RWPE1 (cell line): ENCODE measurements at regions of chr9 and their contacts with region 1.

Region 1: DNA sequence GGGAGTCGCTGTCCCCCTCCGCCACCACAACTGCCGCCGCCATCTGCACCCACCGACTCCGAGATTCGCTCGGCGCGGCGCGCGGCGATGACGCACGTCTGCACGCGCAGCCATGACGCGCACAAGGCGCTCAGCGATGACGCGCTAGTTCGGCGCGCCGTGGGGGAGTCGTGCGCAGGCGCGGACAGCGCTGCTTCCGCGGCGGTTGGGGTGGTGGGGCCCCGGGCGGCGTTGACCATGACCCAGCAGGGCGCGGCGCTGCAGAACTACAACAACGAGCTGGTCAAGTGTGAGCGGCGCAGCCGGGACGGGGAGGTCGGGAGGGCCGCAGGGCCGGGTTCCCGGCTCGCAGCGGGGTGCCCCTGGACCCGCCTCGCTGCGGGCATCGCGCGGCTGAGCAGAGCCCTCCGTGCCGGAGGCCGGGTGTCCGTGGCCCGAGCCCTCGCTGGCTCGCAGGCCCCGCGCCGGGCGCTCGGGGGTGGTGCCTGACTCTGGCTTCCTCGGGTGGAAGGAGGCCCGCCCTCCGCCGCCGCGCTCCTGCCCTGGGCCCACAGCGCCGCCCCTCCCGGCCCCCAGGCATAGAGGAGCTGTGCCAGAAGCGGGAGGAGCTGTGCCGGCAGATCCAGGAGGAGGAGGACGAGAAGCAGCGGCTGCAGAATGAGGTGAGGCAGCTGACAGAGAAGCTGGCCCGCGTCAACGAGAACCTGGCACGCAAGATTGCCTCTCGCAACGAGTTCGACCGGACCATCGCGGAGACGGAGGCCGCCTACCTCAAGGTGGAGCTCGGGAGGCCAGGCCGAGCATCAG is at the starts of genes ANAPC2 and SSNA1:
- DNase-seq: peak; percentile 98
- H3K27ac ChIP-seq: peak within 1 kb of the TSS; percentile 99
- CTCF ChIP-seq: peak; percentile 57

Region 2: GRCh38 chr9:137021979-137022619 is 166.6 kb before region 1 on chr9:
- CTCF ChIA-PET with region 1: no interaction called
- POLR2A ChIA-PET with region 1: no interaction called
- DNase-seq: peak; percentile 95
- H3K27ac ChIP-seq: peak overlapping the region; percentile 81
- CTCF ChIP-seq: no peak

Region 3: GRCh38 chr9:137200311-137201204 is 11.9 kb after region 1 on chr9 and contains the start of gene TPRN:
- CTCF ChIA-PET with region 1: interaction called, 14 read pairs
- POLR2A ChIA-PET with region 1: interaction called, 17 read pairs
- DNase-seq: peak; percentile 100
- H3K27ac ChIP-seq: peak within 1 kb of the TSS; percentile 99
- CTCF ChIP-seq: no peak